Mammary epithelial cell (primary cell): ENCODE measurements at regions of chr14 and their contacts with region 1.

Region 1: DNA sequence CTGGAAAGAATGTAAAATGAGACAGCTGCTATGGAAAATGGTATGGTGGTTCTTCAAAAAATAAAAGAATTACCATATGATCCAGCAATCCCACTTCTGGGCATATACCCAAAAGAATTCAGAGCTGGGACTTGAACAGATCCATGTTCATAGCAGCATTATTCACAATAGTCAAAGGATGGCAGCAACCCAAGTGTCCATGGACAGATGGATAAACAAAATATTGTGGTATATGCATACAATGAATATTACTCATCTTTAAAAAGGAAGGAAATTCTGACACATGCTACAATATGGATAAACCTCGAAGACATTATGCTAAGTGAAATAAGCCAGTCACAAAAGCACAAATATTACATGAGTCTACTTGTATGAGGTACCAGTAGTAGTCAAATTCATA is 9.1 kb downstream of the RAB2B start:
- DNase-seq: peak; percentile 76
- H3K4me3 ChIP-seq: no peak overlapping the region
- H3K27ac ChIP-seq: no peak overlapping the region
- H3K4me1 ChIP-seq: no peaks in the 10 kb centered on the region
- H3K27me3 ChIP-seq: no peaks in the 10 kb centered on the region
- CTCF ChIP-seq: no peak

Region 2: DNA sequence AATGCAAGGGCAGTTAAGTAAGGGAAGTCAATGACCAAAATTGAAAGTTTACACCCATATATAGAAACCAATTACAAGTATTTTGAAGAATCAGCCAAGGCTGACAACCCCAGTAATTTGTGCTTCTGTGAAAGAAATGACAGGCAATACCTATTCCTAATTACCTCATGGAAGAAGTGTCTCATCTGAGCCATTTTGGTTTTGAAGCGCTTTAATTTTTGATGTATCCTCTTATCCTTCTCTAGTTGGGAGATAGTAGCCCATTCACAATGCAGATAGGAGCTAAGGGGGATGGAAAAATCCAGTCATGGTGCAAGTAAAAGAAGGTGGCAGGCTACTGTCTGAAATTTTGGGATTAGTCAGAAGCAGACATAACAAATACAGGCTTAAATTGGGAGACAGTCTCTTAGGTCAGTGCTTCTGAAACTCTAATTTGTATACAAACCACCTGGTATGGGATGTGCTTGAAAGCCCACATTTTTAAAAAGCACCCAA is 53.4 kb before region 1 on chr14:
- CTCF ChIA-PET with region 1: no interaction called
- dilution Hi-C with region 1: no loop called
- in situ Hi-C with region 1: no loop called
- intact Hi-C with region 1: no loop called
- DNase-seq: no peak
- H3K4me3 ChIP-seq: no peak overlapping the region
- H3K27ac ChIP-seq: no peak overlapping the region
- H3K4me1 ChIP-seq: no peaks in the 10 kb centered on the region
- H3K27me3 ChIP-seq: no peaks in the 10 kb centered on the region
- CTCF ChIP-seq: no peak

Region 3: GRCh38 chr14:21505012-21505553 is 37.5 kb after region 1 on chr14:
- CTCF ChIA-PET with region 1: no interaction called
- dilution Hi-C with region 1: loop called (anchors 5 kb)
- in situ Hi-C with region 1: no loop called
- intact Hi-C with region 1: no loop called
- DNase-seq: no peak
- H3K4me3 ChIP-seq: no peak overlapping the region
- H3K27ac ChIP-seq: no peak overlapping the region
- H3K4me1 ChIP-seq: no peaks in the 10 kb centered on the region
- H3K27me3 ChIP-seq: no peaks in the 10 kb centered on the region
- CTCF ChIP-seq: no peak

Region 4: DNA sequence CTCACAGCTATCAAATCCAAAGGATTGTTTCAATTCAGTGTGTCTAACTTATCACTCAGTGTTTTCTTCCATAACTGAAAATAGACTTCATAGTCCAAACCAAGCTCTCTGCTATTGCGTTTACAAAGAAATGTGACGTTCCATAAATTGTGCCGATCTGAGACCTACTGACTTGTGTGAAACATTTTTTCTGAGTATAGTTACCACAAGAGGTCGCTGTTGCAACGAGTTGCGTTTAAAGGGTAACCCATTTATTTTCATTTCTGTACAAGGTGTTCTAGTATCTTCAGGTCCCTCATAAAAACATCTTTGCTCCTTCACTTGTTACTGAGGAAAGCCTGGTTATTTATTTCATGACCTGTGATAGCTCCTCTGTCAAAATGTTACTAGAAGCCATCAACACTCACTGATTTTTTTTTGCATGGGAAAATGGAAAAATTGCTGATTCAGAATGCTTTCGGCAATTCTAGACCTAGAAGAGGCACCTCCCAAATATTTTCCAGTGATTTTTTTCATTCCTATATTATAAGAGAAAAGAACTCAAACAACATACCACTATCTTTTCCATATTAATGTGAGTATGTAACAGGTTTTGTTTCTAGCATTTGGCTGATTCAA is 266.9 kb after region 1 on chr14:
- CTCF ChIA-PET with region 1: no interaction called
- dilution Hi-C with region 1: no loop called
- in situ Hi-C with region 1: no loop called
- intact Hi-C with region 1: no loop called
- DNase-seq: peak; percentile 34
- H3K4me3 ChIP-seq: no peak overlapping the region
- H3K27ac ChIP-seq: no peak overlapping the region
- H3K4me1 ChIP-seq: no peaks in the 10 kb centered on the region
- H3K27me3 ChIP-seq: peaks cover 3% of the 10 kb centered on the region
- CTCF ChIP-seq: peak; percentile 65 to 69